Dendritic cell treated with granulocyte-macrophage colony-stimulating factor and Interleukin-4, amounts not matched to agents 40 ng/mL and 50 ng/mL, for 4 days (primary cell): ENCODE measurements at regions of chr9 and their contacts with region 1.

Region 1: GRCh38 chr9:4984621-4985385 is at the start of gene JAK2:
- H3K4me3 Mint-ChIP-seq: no peak within 1 kb of the TSS
- H3K27ac Mint-ChIP-seq: peak within 1 kb of the TSS; percentile 97
- H3K4me1 Mint-ChIP-seq: peaks cover 46% of the 10 kb centered on the region
- H3K27me3 Mint-ChIP-seq: no peaks in the 10 kb centered on the region

Region 2: DNA sequence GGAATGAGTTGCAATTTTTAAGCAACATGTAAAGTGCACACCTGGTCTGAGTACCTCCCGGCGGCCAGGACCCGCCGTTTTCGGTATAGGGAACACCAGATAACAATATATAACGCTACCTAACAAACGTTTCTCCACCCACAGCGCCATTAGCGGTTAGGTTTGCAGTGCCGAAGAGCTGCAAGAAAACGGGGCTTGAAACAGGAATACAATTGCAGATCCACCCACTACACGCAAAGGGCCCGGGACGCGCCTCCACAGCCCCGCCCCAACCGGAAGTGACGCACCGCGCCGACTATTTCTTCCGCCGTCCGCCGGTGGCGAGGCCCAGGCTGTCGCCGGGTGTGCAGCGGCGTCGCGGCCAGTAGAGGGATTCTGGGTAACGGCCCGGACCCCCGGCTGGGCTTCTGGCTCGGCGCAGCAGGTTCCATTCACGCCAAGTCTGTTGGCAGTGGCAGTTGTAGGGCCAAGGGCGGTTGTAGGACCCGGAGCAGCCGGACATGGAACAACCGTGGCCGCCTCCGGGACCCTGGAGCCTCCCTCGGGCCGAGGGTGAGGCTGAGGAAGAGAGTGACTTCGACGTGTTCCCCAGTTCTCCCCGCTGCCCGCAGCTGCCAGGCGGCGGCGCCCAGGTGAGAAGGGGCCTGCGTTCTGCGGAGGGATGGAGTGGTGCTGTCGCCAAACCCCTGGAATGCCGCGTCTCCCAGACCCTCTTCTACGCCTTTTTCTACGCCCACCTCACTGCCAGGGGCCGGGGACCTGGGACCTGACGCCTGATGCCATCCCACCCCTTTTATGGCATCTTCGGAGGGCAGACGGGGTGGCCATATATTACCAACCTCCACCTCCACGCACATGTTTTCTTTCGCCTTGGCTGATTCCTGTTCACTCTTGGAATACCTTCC is 305.3 kb before region 1 on chr9 and contains the start of gene CDC37L1:
- intact Hi-C with region 1: loop called (anchors 10 kb)
- H3K4me3 Mint-ChIP-seq: no peak within 1 kb of the TSS
- H3K27ac Mint-ChIP-seq: no peak within 1 kb of the TSS
- H3K4me1 Mint-ChIP-seq: peaks cover 15% of the 10 kb centered on the region
- H3K27me3 Mint-ChIP-seq: peaks cover 1% of the 10 kb centered on the region

Region 3: DNA sequence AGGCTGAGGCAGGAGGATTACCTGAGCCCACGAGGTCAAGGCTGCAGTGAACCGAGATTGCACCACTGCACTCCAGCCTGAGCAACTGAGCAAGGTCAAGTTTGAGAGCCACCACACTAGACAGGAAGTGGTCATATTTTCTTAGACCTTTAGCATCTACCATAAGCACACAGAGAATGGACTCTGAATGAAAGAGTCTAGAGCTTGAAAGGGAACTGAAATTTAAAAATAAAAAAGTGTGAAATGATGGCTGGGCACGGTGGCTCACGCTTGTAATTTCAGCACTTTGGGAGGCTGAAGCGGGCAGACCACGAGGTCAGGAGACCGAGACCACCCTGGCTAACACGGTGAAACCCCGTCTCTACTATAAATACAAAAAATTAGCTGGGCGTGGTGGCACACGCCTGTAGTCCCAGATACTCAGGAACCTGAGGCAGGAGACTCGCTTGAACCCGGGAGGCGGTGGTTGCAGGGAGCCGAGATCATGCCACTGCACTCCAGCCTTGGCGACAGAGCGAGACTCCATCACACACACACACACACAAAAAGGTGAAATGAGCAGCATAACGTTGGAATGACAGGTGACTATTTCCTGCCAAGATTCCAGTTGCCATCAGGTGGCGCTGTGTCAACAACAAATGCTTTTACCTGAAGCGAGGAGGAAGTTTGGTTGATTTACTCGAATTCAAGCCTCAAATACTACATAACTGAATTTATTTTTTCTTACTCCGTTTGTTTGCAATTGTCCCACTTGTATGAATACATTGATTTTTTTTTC is 222.5 kb before region 1 on chr9:
- intact Hi-C with region 1: loop called (anchors 2 kb)
- H3K4me3 Mint-ChIP-seq: peak overlapping the region; percentile 54
- H3K27ac Mint-ChIP-seq: peak overlapping the region; percentile 39
- H3K4me1 Mint-ChIP-seq: peaks cover 52% of the 10 kb centered on the region
- H3K27me3 Mint-ChIP-seq: peaks cover 11% of the 10 kb centered on the region

Region 4: GRCh38 chr9:4792572-4793458 is 192.0 kb before region 1 on chr9 and contains the start of gene RCL1:
- intact Hi-C with region 1: loop called (anchors 10 kb)
- H3K4me3 Mint-ChIP-seq: peak within 1 kb of the TSS; percentile 90
- H3K27ac Mint-ChIP-seq: peak within 1 kb of the TSS; percentile 87
- H3K4me1 Mint-ChIP-seq: peaks cover 40% of the 10 kb centered on the region
- H3K27me3 Mint-ChIP-seq: peaks cover 21% of the 10 kb centered on the region

Region 5: GRCh38 chr9:4850603-4851310 is 134.0 kb before region 1 on chr9:
- intact Hi-C with region 1: loop called (anchors 5 kb)
- H3K4me3 Mint-ChIP-seq: no peak overlapping the region
- H3K27ac Mint-ChIP-seq: no peak overlapping the region
- H3K4me1 Mint-ChIP-seq: no peaks in the 10 kb centered on the region
- H3K27me3 Mint-ChIP-seq: no peaks in the 10 kb centered on the region

Region 6: DNA sequence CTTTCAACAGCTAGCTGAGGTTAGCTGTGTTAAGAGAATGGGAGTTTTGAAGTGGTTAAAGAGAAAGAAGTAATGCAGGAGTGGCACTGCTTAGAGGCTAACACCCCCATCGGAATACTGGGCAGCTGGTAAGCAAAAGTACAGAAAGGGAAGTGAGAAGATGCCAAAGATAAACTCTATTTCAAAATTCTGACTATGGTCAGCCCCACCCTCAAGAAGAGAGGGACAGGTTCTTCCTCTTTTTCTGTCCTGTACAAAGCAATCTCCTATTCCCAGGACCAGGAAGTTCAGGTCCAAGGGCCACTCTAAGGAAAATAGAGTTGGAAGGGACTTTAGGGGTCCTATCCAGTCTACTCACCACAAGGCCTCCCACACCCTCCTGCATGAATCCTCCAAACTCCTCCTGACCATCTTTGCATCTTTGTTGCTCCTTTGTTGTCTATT is 45.7 kb before region 1 on chr9:
- intact Hi-C with region 1: loop called (anchors 2 kb)
- H3K4me3 Mint-ChIP-seq: peak overlapping the region; percentile 31
- H3K27ac Mint-ChIP-seq: peak overlapping the region; percentile 72
- H3K4me1 Mint-ChIP-seq: peaks cover 52% of the 10 kb centered on the region
- H3K27me3 Mint-ChIP-seq: no peaks in the 10 kb centered on the region

Region 7: DNA sequence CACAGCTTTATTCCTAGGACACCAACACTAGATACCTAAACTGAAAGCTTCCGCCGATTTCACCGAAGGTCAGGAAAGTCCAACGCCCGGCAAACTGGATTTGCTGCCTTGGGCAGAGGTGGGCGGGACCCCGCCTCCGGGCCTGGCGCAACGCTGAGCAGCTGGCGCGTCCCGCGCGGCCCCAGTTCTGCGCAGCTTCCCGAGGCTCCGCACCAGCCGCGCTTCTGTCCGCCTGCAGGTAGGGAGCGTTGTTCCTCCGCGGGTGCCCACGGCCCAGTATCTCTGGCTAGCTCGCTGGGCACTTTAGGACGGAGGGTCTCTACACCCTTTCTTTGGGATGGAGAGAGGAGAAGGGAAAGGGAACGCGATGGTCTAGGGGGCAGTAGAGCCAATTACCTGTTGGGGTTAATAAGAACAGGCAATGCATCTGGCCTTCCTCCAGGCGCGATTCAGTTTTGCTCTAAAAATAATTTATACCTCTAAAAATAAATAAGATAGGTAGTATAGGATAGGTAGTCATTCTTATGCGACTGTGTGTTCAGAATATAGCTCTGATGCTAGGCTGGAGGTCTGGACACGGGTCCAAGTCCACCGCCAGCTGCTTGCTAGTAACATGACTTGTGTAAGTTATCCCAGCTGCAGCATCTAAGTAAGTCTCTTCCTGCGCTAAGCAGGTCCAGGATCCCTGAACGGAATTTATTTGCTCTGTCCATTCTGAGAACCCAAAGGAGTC is 465.7 kb after region 1 on chr9 and contains the start of gene CD274:
- intact Hi-C with region 1: loop called (anchors 10 kb)
- H3K4me3 Mint-ChIP-seq: peak within 1 kb of the TSS; percentile 87
- H3K27ac Mint-ChIP-seq: peak within 1 kb of the TSS; percentile 98
- H3K4me1 Mint-ChIP-seq: peaks cover 52% of the 10 kb centered on the region
- H3K27me3 Mint-ChIP-seq: no peaks in the 10 kb centered on the region